Cardiac septum (tissue), 1 donor: ENCODE measurements at regions of chr6 and their contacts with region 1.

Region 1: DNA sequence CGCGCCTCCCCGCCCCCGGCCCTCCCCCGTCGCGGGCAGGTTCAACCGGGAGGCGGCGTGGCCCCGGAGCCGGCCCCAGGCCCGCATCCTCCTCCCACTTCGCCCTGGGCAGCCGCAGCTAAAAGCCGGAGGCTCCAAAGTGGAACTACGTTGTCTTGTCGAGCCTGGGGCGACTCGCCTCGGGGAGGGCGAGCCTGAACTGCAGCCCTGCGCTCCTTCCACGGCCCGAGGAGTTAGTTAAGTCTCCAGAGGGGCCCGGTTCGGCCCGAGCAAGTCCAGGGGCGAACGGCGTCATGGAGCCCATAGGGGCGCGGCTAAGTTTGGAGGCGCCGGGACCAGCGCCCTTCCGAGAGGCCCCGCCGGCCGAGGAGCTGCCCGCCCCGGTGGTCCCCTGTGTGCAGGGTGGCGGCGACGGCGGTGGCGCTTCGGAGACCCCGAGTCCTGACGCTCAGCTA is at the start of gene PPP1R3G:
- DNase-seq: no peak
- total RNA-seq, gene PPP1R3G: 7.7 TPM

Region 2: DNA sequence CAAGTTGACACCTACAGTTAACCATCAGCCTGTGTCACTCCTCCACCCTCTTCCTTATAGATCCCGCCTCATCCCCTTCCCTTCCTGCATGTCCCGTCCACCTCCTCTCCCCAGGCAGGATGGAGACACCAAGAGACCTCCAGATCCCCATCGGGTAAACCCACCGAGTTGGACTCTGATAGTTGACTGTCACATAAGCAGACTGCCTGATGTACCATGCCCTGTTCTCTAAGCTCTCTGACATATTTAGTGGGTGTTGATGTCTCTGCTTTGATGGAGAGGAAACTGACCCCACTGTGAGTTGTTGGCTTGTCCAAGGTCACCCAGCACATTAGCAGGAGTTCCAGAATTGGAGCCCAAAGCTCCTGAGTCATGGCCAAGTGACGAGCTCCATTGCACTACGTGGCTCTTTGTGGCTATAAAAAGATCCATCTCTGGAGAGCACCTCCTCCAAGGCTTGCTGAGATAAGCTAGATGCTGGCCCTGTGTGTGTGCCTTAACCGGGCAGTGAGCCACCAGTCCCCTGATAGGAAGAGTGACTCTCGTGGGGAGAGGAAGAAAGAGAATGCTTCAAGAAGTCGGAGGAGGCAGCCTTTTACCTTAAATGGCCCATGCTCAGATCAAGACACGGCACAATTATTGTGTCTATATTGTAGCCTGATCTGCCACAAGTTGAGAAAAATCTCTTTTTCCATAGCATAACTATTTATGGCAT is 713.9 kb before region 1 on chr6:
- intact Hi-C with region 1: no loop called
- DNase-seq: no peak

Region 3: DNA sequence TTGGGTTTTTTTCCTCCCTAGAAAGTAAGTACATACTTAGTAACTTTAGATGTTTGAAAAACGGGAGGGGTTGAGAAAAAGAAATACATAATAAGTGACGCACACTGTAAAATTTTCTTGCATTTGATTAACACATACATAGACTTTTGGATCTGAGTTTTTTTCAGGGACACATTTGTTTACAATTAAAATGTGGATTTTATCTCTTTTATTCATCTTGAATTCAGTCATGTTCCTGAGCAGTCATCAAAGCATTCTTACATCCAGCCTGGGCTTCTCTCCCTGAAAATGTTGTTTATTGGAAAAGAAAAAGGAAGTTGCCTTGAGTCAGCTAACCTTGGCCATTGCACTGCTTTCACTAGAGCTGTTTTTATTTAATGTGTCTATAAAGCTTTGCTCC is 72.7 kb before region 1 on chr6:
- intact Hi-C with region 1: no loop called
- DNase-seq: no peak

Region 4: GRCh38 chr6:5108068-5108467 is 22.8 kb after region 1 on chr6:
- intact Hi-C with region 1: loop called (anchors 2 kb)
- DNase-seq: peak; percentile 76

Region 5: DNA sequence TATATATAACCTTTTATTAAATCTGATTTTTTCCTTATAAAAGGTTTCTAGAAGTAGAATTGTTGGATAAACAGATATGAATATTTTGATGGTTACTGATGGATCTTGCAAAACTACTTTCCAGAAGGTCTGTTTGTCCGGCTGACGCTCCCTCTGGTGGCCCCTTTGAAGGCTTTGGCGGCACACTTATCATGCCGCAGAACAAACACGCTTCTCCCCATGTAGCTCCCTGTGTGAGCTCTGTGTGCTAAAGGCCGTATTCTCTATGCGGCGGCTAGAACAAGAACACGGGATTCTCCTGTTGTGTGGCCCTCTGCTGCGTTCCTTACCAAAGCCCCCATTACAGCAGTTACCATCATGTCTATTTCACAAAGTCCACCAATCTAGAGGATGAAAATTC is 29.9 kb after region 1 on chr6:
- intact Hi-C with region 1: loop called (anchors 2 kb)
- DNase-seq: no peak

Region 6: GRCh38 chr6:5205877-5206850 is 120.9 kb after region 1 on chr6:
- intact Hi-C with region 1: loop called (anchors 5 kb)
- DNase-seq: no peak

Region 7: DNA sequence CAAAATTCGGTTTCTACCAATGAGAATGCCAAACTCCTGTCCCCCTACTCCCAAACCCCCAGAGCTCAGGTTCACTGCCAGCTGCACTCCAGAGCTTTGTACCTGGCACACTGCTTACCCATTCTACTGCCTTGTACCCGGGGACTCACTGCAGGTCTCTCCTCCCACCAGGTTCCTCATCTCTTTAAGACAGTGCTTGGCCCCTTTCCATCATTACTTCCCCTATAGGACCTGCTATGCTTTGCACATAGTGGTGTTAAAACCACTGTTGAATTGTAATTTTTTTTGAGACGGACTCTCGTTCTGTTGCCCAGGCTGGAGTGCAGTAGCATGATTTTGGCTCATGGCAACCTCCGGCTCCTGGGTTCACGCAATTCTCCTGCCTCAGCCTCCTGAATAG is 149.7 kb after region 1 on chr6:
- intact Hi-C with region 1: no loop called
- DNase-seq: no peak